ENCODE measurements at regions of chr1 and their contacts with region 1.

Region 1: DNA sequence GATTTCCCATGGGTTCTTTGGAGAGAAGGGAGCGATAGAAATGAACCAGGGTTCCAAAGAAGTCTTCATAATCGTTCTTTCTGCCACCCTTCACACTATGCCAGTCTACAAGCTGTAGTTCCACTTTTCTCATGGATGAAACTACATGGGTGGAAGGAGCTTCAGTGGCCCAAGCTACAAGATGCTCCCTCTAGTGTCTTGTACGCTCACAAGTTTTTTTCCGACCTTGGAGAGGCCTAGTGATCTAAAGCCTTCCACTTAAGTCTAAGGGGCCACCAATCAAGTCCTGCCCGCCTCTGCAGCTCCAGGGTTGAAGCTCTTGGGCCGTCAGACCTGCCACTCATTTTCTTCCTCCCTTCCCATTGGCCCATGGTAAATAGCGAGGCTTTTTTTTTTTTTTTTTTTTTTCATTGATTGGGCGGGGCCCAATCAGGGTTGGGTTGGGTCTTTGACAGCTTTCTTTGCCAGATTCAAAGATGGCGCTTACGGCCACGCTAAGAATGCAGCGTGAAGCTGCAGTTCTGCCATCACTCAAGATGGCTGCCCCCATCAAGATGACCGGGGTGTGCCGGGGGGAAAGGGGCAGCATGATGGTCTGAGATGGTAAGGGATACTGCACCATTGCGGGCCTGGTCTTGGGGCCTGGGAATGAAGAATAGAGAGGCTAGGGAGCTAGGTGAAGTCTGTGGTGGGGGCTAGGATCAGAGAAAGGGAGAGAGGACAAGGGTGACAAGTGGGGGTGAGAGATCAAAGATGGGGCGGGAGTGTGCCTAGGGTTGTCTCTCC is at the start of gene TOMM40L:
- DNase-seq: peak; percentile 97
- H3K4me3 ChIP-seq: peak within 1 kb of the TSS; percentile 71 to 90 (median 80)
- H3K27ac ChIP-seq: peak within 1 kb of the TSS; percentile 80 to 88 (median 82)
- H3K4me1 ChIP-seq: peaks cover 26 to 30% (median 27%) of the 10 kb centered on the region in 4 donors
- H3K27me3 ChIP-seq: no peaks in the 10 kb centered on the region
- CTCF ChIP-seq: peak; percentile 46 to 64 (median 59)
- EP300 ChIP-seq: no peak
- POLR2A ChIP-seq: no peak
- total RNA-seq, gene TOMM40L: 9.1 to 24.1 (median 16.3) TPM

Region 2: DNA sequence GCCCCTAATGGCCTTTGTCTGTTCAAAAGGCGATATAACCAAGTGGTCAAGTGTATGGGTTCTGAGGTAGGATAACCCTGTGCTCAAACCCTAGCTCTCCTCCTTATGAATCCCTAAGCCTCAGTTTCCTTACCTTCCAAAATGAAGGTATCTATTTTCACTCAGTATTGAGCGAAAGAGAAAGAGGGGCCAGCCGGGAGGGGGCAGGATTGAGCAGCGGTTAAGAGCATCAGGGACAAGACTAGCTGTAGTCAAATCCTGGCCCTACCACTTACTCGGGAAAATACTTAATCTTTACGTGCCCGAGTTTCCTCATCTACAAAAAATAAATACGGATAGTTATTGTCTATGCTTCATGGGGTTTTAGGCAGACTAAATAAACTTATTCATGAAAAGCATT is 404.1 kb before region 1 on chr1:
- intact Hi-C with region 1: no loop called
- DNase-seq: peak; percentile 24
- H3K4me3 ChIP-seq: no peak overlapping the region
- H3K27ac ChIP-seq: no peak overlapping the region
- H3K4me1 ChIP-seq: no peaks in the 10 kb centered on the region
- H3K27me3 ChIP-seq: peaks cover 0 to 9% (median 0%) of the 10 kb centered on the region in 4 donors
- CTCF ChIP-seq: no peak
- EP300 ChIP-seq: no peak
- POLR2A ChIP-seq: no peak

Region 3: DNA sequence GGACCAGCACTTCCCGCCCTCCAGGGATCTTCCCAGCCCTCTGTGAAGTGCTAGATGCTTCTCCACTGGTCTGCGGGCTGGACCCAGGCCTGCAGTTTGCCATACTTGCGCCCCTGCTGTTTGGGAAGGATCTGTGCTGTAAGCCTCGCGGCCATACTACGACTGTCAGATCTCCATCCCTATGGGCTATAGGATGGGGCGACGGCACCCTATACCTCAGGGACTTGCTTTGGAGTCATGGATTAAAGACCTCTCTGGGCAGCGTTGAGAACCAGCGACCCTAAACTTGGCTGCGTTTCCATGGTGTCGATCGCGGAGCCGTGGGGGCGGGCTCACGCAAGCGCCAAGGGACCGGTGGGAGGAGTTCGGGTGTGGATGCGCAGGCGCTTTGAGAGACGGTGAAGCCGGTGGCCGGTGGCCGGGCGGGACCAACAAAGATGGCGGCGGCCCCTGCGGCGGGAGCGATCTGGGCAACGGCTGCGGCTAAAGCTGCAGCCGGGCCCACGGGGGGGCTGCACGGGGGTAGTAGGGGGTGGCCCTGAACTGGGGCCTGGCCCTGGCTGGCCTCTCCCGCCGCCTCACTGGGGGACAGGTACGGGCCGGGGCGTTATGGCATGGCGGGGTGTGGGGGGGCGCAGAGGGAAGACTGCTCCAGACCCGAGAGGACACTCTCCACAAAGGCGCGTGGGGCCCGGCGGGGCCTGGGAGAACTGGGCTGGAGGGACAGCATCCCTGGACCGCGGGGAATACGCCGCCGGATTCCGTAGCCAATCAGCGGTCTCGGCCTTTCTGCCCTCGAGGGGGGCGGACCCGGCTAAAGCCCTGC is 66.4 kb before region 1 on chr1 and contains the start of gene USP21:
- intact Hi-C with region 1: no loop called
- DNase-seq: peak; percentile 98
- H3K4me3 ChIP-seq: peak within 1 kb of the TSS; percentile 81 to 88 (median 86)
- H3K27ac ChIP-seq: peak within 1 kb of the TSS; percentile 87 to 90 (median 88)
- H3K4me1 ChIP-seq: peaks cover 35 to 56% (median 46%) of the 10 kb centered on the region in 4 donors
- H3K27me3 ChIP-seq: no peaks in the 10 kb centered on the region
- CTCF ChIP-seq: peak in 2 of 3 experiments; percentile 24 to 47
- EP300 ChIP-seq: no peak
- POLR2A ChIP-seq: no peak
- total RNA-seq, gene USP21: 13.3 to 25.3 (median 16.3) TPM

Region 4: GRCh38 chr1:161290779-161291178 is 65.1 kb after region 1 on chr1:
- intact Hi-C with region 1: loop called (anchors 2 kb)
- DNase-seq: no peak
- H3K4me3 ChIP-seq: no peak overlapping the region
- H3K27ac ChIP-seq: no peak overlapping the region
- H3K4me1 ChIP-seq: peaks cover 0 to 4% (median 0%) of the 10 kb centered on the region in 4 donors
- H3K27me3 ChIP-seq: no peaks in the 10 kb centered on the region
- CTCF ChIP-seq: no peak
- EP300 ChIP-seq: no peak
- POLR2A ChIP-seq: no peak

Region 5: GRCh38 chr1:161305867-161306519 is 80.3 kb after region 1 on chr1:
- intact Hi-C with region 1: loop called (anchors 5 kb)
- DNase-seq: peak; percentile 93
- H3K4me3 ChIP-seq: peak overlapping the region; percentile 65 to 84 (median 70)
- H3K27ac ChIP-seq: peak overlapping the region; percentile 35 to 66 (median 50)
- H3K4me1 ChIP-seq: peaks cover 20 to 36% (median 32%) of the 10 kb centered on the region in 4 donors
- H3K27me3 ChIP-seq: peaks cover 0 to 8% (median 0%) of the 10 kb centered on the region in 4 donors
- CTCF ChIP-seq: peak in 2 of 3 experiments; percentile 31 to 37
- EP300 ChIP-seq: no peak
- POLR2A ChIP-seq: no peak

Region 6: GRCh38 chr1:161367684-161368400 is 142.1 kb after region 1 on chr1 and contains the start of gene CFAP126:
- intact Hi-C with region 1: loop called (anchors 5 kb)
- DNase-seq: no peak
- H3K4me3 ChIP-seq: no peak within 1 kb of the TSS
- H3K27ac ChIP-seq: peak within 1 kb of the TSS; percentile 5 to 64 (median 50)
- H3K4me1 ChIP-seq: peaks cover 5 to 9% (median 9%) of the 10 kb centered on the region in 4 donors
- H3K27me3 ChIP-seq: no peaks in the 10 kb centered on the region
- CTCF ChIP-seq: peak; percentile 19 to 33 (median 27)
- EP300 ChIP-seq: no peak
- POLR2A ChIP-seq: no peak
- total RNA-seq, gene CFAP126: not detected

Region 7: GRCh38 chr1:161382214-161383019 is 156.7 kb after region 1 on chr1:
- intact Hi-C with region 1: loop called (anchors 2 kb)
- DNase-seq: no peak
- H3K4me3 ChIP-seq: no peak overlapping the region
- H3K27ac ChIP-seq: peak overlapping the region; percentile 57 to 72 (median 58)
- H3K4me1 ChIP-seq: peaks cover 4 to 22% (median 12%) of the 10 kb centered on the region in 4 donors
- H3K27me3 ChIP-seq: no peaks in the 10 kb centered on the region
- CTCF ChIP-seq: peak; percentile 67 to 75 (median 69)
- EP300 ChIP-seq: peak; percentile 45
- POLR2A ChIP-seq: peak; percentile 3